HEK293 (cell line): ENCODE measurements at regions of chr1 and their contacts with region 1.

Region 1: DNA sequence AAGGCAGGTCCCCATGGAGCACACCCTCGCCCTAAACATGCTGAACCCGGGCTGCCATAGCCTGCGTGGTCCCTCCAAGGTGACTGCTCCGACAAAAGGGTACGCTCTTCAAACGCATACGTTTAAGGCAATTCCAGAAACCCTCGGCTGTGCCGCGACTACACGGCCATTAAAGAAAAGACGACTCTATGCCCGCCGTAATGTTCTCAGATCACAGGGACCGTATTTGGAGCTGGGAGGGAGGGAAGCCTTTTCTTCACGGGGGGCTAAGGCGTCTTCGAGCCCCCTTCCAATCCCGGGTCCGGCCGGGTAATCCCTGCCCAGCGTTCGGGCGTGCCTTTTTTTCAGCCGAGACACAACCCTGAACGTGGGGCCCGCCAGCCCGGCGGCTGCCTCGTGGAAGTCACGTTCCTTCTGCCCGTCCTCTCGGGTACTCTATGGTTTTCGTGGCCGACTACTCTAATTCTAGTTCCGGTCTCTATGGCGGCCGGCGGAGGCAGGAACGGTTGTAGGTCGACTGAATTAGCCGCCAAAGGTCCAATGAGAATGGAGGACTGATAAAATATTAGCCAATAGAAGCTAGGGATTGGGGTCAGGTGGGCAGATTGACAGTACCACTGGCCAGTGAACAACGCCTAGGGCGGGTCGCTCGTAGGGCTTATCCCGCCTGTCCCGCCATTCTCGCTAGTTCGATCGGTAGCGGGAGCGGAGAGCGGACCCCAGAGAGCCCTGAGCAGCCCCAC is at the start of gene YBX1:
- H3K4me3 ChIP-seq: peak within 1 kb of the TSS; percentile 78
- H3K27ac ChIP-seq: peak within 1 kb of the TSS; percentile 85
- H3K4me1 ChIP-seq: peaks cover 12% of the 10 kb centered on the region
- CTCF ChIP-seq: no peak

Region 2: GRCh38 chr1:42657971-42658879 is 23.7 kb before region 1 on chr1 and contains the start of gene PPIH:
- CTCF ChIA-PET with region 1: no interaction called
- POLR2A ChIA-PET with region 1: interaction called, 23 read pairs
- H3K4me3 ChIP-seq: peak within 1 kb of the TSS; percentile 74
- H3K27ac ChIP-seq: peak within 1 kb of the TSS; percentile 67
- H3K4me1 ChIP-seq: no peaks in the 10 kb centered on the region
- CTCF ChIP-seq: peak; percentile 82

Region 3: GRCh38 chr1:42669936-42670335 is 12.0 kb before region 1 on chr1:
- CTCF ChIA-PET with region 1: interaction called, 3 read pairs
- POLR2A ChIA-PET with region 1: interaction called, 17 read pairs
- H3K4me3 ChIP-seq: no peak overlapping the region
- H3K27ac ChIP-seq: no peak overlapping the region
- H3K4me1 ChIP-seq: no peaks in the 10 kb centered on the region
- CTCF ChIP-seq: no peak